ENCODE measurements at regions of chr17 and their contacts with region 1.

Region 1: DNA sequence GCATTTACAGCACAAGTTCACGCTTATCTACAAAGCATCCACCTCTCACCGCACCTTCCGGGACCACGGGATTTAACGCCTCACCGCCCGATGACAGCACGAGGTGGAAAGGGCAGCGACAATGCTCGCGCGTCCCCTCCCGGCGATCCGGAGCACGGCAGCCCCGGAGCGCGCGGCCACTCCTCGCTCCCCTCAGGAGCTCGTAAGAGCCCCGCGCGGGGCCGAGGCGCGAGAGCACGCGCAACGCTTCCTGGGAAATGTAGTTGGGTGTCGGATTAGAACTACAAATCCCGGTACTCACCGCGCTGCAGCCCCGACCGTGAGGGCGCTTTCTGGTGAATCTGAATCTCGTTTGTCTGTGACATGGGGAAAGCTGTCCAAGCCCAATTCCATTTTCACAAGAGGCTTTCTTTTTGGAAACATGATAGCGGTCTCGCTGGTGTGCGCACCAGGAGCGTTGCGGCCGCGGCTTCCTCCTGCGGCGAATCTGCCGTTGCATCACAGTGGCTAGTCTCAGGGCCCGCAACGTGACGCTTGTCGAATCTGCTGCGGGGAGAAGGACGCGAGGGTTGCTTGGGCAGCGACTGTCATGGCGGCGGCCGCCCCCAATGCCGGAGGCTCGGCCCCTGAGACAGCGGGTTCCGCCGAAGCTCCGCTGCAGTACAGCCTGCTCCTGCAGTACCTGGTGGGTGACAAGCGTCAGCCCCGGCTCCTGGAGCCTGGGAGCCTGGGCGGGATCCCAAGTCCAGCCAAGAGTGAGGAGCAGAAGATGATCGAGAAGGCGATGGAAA is at the start of gene TIMM22:
- DNase-seq: peak; percentile 86 to 98 (median 90)
- ATAC-seq: peak; percentile 92
- H3K4me3 ChIP-seq: peak within 1 kb of the TSS; percentile 100
- H3K4me3 Mint-ChIP-seq: peak within 1 kb of the TSS; percentile 100
- H3K27ac ChIP-seq: peak within 1 kb of the TSS; percentile 73 to 86
- H3K27ac Mint-ChIP-seq: peak within 1 kb of the TSS; percentile 93
- H3K4me1 ChIP-seq: peaks cover 24% of the 10 kb centered on the region
- H3K4me1 Mint-ChIP-seq: peaks cover 27% of the 10 kb centered on the region
- H3K27me3 ChIP-seq: no peaks in the 10 kb centered on the region
- H3K27me3 Mint-ChIP-seq: no peaks in the 10 kb centered on the region
- CTCF ChIP-seq: peak; percentile 93
- total RNA-seq, gene TIMM22: 10.2 to 10.9 TPM

Region 2: GRCh38 chr17:409848-410545 is 586.8 kb before region 1 on chr17:
- CTCF ChIA-PET with region 1: interaction called, 11 read pairs
- POLR2A ChIA-PET with region 1: interaction called, 6 read pairs
- intact Hi-C with region 1: loop called (anchors 2 to 5 kb)
- DNase-seq: peak; percentile 98 to 100 (median 99)
- ATAC-seq: peak; percentile 15
- H3K4me3 ChIP-seq: peak overlapping the region; percentile 86
- H3K4me3 Mint-ChIP-seq: peak overlapping the region; percentile 91
- H3K27ac ChIP-seq: peak overlapping the region; percentile 88 to 95
- H3K27ac Mint-ChIP-seq: peak overlapping the region; percentile 96
- H3K4me1 ChIP-seq: peaks cover 63% of the 10 kb centered on the region
- H3K4me1 Mint-ChIP-seq: peaks cover 58% of the 10 kb centered on the region
- H3K27me3 ChIP-seq: no peaks in the 10 kb centered on the region
- H3K27me3 Mint-ChIP-seq: peaks cover 4% of the 10 kb centered on the region
- CTCF ChIP-seq: no peak

Region 3: DNA sequence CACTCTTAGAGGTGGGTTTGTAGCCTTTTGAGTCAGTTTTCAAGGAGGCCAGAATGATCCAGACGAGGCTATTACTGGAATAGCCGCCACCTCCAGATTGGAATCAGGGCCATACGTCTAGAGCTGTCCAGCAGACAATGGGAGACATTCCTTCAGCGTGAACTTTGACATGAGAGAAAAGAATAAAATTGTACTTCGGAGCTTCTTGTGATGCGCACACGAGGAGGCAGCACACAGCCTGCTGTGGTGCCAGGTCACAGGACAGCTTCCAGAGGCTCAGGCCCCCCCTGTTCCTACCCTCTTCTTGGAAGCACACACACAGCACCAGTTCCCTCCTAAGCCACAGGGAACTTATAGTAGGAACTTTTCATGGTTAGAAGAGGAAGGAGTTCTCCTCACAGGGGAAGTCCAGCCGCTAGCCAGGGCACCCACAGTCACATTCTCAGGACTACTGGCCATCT is 363.1 kb before region 1 on chr17:
- CTCF ChIA-PET with region 1: no interaction called
- POLR2A ChIA-PET with region 1: no interaction called
- intact Hi-C with region 1: no loop called
- DNase-seq: no peak
- ATAC-seq: no peak
- H3K4me3 ChIP-seq: no peak overlapping the region
- H3K4me3 Mint-ChIP-seq: no peak overlapping the region
- H3K27ac ChIP-seq: no peak overlapping the region
- H3K27ac Mint-ChIP-seq: no peak overlapping the region
- H3K4me1 ChIP-seq: no peaks in the 10 kb centered on the region
- H3K4me1 Mint-ChIP-seq: no peaks in the 10 kb centered on the region
- H3K27me3 ChIP-seq: no peaks in the 10 kb centered on the region
- H3K27me3 Mint-ChIP-seq: no peaks in the 10 kb centered on the region
- CTCF ChIP-seq: no peak

Region 4: DNA sequence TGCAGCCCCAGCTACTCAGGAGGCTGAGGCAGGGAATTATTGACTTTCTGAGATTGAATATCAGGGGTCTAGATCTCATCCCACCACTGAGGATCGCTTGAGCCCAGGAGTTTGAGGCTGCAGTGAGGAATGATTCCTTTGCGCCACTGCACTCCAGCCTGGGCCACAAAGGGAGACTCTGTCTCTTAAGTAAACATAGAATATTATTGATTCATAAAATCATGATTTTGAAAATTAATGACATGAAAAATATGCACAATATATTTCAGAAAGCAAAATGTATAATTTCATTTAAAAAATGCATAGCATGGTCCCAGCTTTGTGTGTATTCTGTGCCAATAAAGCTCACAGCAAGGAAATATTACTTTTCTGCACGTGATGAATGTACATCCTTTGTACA is 280.5 kb before region 1 on chr17:
- CTCF ChIA-PET with region 1: interaction called, 8 read pairs
- POLR2A ChIA-PET with region 1: interaction called, 12 read pairs
- intact Hi-C with region 1: loop called (anchors 1 to 5 kb)
- DNase-seq: no peak
- ATAC-seq: no peak
- H3K4me3 ChIP-seq: no peak overlapping the region
- H3K4me3 Mint-ChIP-seq: peak overlapping the region; percentile 77
- H3K27ac ChIP-seq: no peak overlapping the region
- H3K27ac Mint-ChIP-seq: no peak overlapping the region
- H3K4me1 ChIP-seq: peaks cover 27% of the 10 kb centered on the region
- H3K4me1 Mint-ChIP-seq: peaks cover 28% of the 10 kb centered on the region
- H3K27me3 ChIP-seq: no peaks in the 10 kb centered on the region
- H3K27me3 Mint-ChIP-seq: no peaks in the 10 kb centered on the region
- CTCF ChIP-seq: no peak

Region 5: GRCh38 chr17:781805-782731 is 214.7 kb before region 1 on chr17 and contains the starts of genes GLOD4 and MRM3:
- CTCF ChIA-PET with region 1: interaction called, 17 read pairs
- POLR2A ChIA-PET with region 1: interaction called, 27 read pairs
- intact Hi-C with region 1: loop called (anchors 1 kb)
- DNase-seq: peak; percentile 86 to 98 (median 94)
- ATAC-seq: peak; percentile 91
- H3K4me3 ChIP-seq: peak within 1 kb of the TSS; percentile 71
- H3K4me3 Mint-ChIP-seq: peak within 1 kb of the TSS; percentile 100
- H3K27ac ChIP-seq: peak within 1 kb of the TSS; percentile 93 to 94
- H3K27ac Mint-ChIP-seq: peak within 1 kb of the TSS; percentile 99
- H3K4me1 ChIP-seq: peaks cover 27% of the 10 kb centered on the region
- H3K4me1 Mint-ChIP-seq: peaks cover 40% of the 10 kb centered on the region
- H3K27me3 ChIP-seq: no peaks in the 10 kb centered on the region
- H3K27me3 Mint-ChIP-seq: no peaks in the 10 kb centered on the region
- CTCF ChIP-seq: no peak
- total RNA-seq, gene GLOD4: 88.0 to 89.3 TPM
- total RNA-seq, gene MRM3: 40.8 to 44.1 TPM

Region 6: GRCh38 chr17:879549-880442 is 117.0 kb before region 1 on chr17:
- CTCF ChIA-PET with region 1: interaction called, 20 read pairs
- POLR2A ChIA-PET with region 1: no interaction called
- intact Hi-C with region 1: loop called (anchors 2 to 5 kb)
- DNase-seq: peak; percentile 45 to 86 (median 62)
- ATAC-seq: peak; percentile 65
- H3K4me3 ChIP-seq: no peak overlapping the region
- H3K4me3 Mint-ChIP-seq: no peak overlapping the region
- H3K27ac ChIP-seq: no peak overlapping the region
- H3K27ac Mint-ChIP-seq: no peak overlapping the region
- H3K4me1 ChIP-seq: peaks cover 10% of the 10 kb centered on the region
- H3K4me1 Mint-ChIP-seq: peaks cover 6% of the 10 kb centered on the region
- H3K27me3 ChIP-seq: peaks cover 2 to 5% of the 10 kb centered on the region in 2 experiments
- H3K27me3 Mint-ChIP-seq: peaks cover 46% of the 10 kb centered on the region
- CTCF ChIP-seq: peak; percentile 69

Region 7: GRCh38 chr17:1012408-1012761 is 15.6 kb after region 1 on chr17:
- CTCF ChIA-PET with region 1: no interaction called
- POLR2A ChIA-PET with region 1: no interaction called
- intact Hi-C with region 1: no loop called
- DNase-seq: no peak
- ATAC-seq: no peak
- H3K4me3 ChIP-seq: no peak overlapping the region
- H3K4me3 Mint-ChIP-seq: no peak overlapping the region
- H3K27ac ChIP-seq: no peak overlapping the region
- H3K27ac Mint-ChIP-seq: no peak overlapping the region
- H3K4me1 ChIP-seq: no peaks in the 10 kb centered on the region
- H3K4me1 Mint-ChIP-seq: no peaks in the 10 kb centered on the region
- H3K27me3 ChIP-seq: no peaks in the 10 kb centered on the region
- H3K27me3 Mint-ChIP-seq: no peaks in the 10 kb centered on the region
- CTCF ChIP-seq: no peak

Region 8: DNA sequence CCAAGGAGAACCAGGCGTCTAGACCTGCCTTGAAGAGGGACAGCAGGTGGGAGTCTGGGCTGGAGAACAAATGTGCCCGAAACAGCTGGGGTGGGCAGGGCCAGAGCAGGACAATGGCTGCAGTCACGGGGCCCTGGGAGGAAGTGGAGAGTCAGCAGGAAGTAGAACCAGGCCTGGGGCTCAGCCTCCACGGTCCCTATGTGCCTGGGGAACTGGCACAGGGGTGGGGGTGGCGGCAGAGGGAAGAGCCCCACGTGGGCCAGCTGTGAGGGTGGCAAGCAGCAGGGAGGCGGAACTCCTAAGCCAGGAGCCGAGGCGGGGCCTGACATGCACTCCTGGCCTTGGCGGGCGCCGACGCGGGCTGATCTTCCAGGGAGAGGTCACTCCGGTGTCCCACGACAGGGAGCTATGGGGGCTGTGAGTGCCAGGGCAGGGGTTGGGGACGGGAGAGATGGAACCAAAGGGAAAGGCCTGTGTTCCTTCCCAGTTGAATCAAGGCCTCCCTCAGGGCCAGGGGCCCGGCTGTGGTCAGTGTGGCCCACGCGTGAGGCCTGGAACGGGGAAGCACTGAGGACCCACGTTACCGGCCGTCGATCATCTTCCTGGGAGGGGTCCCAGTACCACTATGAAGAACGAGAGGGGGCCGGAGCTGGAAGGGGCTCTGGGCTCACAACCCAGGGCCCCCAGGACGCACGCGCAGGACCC is 42.9 kb after region 1 on chr17:
- CTCF ChIA-PET with region 1: no interaction called
- POLR2A ChIA-PET with region 1: no interaction called
- intact Hi-C with region 1: no loop called
- DNase-seq: peak in 3 of 14 experiments; percentile 31 to 71 (median 64)
- ATAC-seq: no peak
- H3K4me3 ChIP-seq: no peak overlapping the region
- H3K4me3 Mint-ChIP-seq: no peak overlapping the region
- H3K27ac ChIP-seq: no peak overlapping the region
- H3K27ac Mint-ChIP-seq: no peak overlapping the region
- H3K4me1 ChIP-seq: peaks cover 5% of the 10 kb centered on the region
- H3K4me1 Mint-ChIP-seq: no peaks in the 10 kb centered on the region
- H3K27me3 ChIP-seq: no peaks in the 10 kb centered on the region
- H3K27me3 Mint-ChIP-seq: no peaks in the 10 kb centered on the region
- CTCF ChIP-seq: no peak